Heart right ventricle (tissue), 16 donors: ENCODE measurements at regions of chr15 and their contacts with region 1.

Region 1: DNA sequence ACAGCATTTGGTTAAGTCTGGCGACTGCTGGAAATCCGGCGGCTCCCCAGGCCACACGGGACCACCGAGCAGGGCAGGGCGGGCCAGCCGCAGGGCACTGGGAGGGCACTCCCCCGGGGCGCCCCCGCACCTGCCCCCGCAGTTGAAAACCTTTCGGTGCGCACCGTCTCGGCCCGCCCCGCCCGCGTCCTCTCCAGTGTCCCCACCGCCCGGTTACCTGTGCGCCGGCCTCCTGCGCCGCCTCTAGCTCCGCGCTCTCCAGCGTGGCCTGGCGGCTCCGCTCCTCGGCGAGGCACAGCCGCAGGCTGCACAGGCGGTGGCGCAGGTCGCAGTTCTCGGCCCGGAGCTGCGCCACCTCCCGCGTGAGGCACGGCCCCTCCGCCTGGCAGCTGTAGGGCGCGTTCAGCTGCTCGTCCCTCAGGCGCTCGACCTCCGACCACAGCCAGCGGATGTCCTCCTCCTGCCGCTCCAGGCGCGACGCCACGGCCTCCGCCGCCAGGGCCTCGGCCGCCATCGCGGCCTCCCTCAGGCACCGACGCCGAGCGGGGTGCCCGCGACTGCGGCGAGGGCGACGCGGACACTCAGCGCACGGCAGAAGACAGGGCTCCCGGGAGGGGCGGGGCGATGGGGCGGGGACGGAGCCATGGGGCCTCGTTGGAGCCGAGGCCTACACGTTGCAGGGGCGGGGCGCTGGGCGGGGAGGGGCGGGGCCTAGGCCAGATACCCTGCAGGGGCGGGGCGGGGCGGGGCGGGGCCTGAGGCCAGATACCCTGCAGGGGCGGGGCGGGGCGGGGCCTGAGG is at the start of gene TARS3:
- DNase-seq: peak; percentile 95 to 97
- ATAC-seq: peak; percentile 97 to 99 (median 99)
- H3K4me3 ChIP-seq: peak within 1 kb of the TSS; percentile 45 to 94 (median 86)
- H3K27ac ChIP-seq: peak within 1 kb of the TSS in 9 of 10 donors; percentile 88 to 94 (median 92)
- H3K4me1 ChIP-seq: peaks cover 0 to 18% (median 10%) of the 10 kb centered on the region in 9 donors
- H3K27me3 ChIP-seq: no peaks in the 10 kb centered on the region
- CTCF ChIP-seq: peak in 4 of 9 donors; percentile 19 to 42 (median 25)
- total RNA-seq, gene TARS3: 26.0 to 42.5 (median 36.2) TPM

Region 2: DNA sequence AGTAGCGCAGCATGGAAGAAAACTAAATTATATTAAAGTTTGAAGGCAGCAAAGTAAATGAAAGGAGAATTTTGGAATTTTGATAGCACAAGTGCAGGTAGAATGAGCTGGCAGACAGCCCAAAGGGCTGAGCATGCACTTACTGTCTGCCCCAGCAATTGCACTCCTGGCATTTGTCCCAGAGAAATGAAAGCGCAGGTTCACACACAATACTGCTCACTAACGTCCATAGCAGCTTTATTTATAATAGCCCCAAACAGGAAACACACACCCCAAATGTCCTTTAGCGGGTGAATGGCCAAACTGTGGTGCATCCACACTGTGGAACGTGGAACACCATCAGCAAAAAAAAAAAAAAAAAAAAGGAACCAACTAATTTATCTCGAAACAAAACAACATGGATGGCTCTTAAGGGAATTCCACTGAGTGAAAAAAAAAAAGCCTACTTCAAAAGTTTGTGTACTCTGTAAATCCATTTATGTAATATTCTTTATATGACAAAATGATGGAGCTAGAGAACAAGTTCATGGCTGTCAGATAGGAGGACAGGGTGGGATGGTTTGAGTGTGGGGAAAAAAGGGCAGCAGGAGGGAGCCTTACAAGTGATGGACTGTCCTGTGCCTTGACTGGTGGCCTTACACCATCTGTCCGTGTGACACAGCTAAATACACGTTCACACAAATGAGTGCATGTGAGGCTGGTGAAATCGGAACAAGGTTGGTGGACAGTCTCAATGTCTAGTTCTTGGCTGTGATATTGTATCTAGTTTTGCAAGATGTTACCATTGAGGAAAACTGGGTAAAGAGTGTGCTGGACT is 65.9 kb before region 1 on chr15:
- intact Hi-C with region 1: loop called in 1 of 10 experiments (anchors 5 kb)
- DNase-seq: peak in 1 of 2 donors; percentile 68
- ATAC-seq: peak; percentile 72 to 92 (median 78)
- H3K4me3 ChIP-seq: no peak overlapping the region
- H3K27ac ChIP-seq: peak overlapping the region in 6 of 10 donors; percentile 9 to 56 (median 22)
- H3K4me1 ChIP-seq: peaks cover 0 to 27% (median 14%) of the 10 kb centered on the region in 9 donors
- H3K27me3 ChIP-seq: no peaks in the 10 kb centered on the region
- CTCF ChIP-seq: no peak

Region 3: GRCh38 chr15:101675796-101676582 is 48.1 kb before region 1 on chr15:
- intact Hi-C with region 1: no loop called
- DNase-seq: no peak
- ATAC-seq: peak in 1 of 8 donors; percentile 75
- H3K4me3 ChIP-seq: no peak overlapping the region
- H3K27ac ChIP-seq: no peak overlapping the region
- H3K4me1 ChIP-seq: peaks cover 0 to 7% (median 0%) of the 10 kb centered on the region in 9 donors
- H3K27me3 ChIP-seq: no peaks in the 10 kb centered on the region
- CTCF ChIP-seq: no peak